Mucosa of descending colon (tissue), 3 donors: ENCODE measurements at regions of chr3 and their contacts with region 1.

Region 1: DNA sequence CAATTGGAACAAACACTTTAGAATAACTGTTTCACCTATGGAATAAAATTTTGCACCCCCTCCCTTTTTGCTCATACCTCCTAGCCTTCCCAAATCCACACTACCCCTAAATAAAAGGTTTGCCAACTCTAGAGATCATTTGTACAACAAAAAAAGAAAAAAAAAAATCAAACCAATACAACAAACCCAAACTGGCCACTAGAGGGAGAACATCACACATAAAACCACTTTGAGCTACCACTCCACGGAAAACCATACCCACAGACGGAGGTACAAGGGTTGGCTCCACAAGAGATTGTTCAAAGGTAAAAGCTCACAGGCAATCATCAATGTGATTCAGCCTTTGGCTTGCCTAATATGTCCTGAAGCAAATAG is 47.6 kb downstream of the SETMAR start:
- DNase-seq: peak in 1 of 3 donors; percentile 74
- ATAC-seq: peak; percentile 77
- H3K4me3 ChIP-seq: no peak overlapping the region
- H3K4me1 ChIP-seq: no peaks in the 10 kb centered on the region
- CTCF ChIP-seq: peak; percentile 45

Region 2: DNA sequence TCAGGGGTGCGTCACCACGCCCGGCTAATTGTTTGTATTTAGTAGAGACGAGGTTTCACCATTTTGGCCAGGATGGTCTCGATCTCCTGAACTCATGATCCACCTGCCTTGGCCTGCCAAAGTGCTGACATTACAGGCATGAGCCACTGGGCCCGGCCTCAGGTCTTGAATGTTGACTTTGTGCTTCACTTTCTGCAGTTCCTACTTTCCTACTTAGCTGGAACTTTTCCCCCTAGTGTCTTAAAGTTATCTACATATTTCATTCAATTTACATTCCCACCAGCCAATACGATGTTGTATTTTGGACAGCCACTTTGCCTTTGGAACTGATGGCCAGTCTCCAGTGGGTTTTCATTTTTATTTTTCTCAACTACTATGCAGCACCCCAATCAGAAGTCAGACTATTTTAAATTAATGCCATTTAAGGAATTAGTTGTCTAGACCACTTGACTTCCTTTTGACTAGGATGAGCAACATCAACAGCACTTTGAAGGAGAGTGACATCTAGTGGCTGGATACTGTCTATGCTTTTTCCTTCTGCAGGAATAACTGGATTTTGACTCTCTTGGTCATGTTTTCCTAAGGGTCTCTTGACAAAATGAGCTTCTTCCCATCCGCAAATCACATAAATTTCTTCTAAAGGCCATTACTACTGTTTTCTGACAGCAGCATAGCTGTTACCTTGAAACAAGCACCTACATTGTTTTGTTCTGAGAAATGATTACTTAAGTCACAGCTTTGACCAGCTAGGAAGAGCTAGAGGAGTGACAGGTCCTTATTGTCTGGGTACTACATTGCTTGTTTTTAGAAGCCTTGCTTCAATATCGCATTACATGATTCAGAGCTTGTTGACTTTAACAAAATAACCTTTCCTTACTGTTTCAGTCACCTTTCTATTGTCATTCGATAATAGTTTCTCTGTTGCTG is 282.6 kb after region 1 on chr3:
- intact Hi-C with region 1: loop called (anchors 5 kb)
- DNase-seq: peak in 1 of 3 donors; percentile 30
- ATAC-seq: peak; percentile 73
- H3K4me3 ChIP-seq: no peak overlapping the region
- H3K4me1 ChIP-seq: no peaks in the 10 kb centered on the region
- CTCF ChIP-seq: peak; percentile 38